AG04450 (cell line): ENCODE measurements at regions of chr2 and their contacts with region 1.

Region 1: GRCh38 chr2:30711646-30712085 is 95.6 kb downstream of the CAPN13 start:
- DNase-seq: peak; percentile 78
- H3K4me3 ChIP-seq: no peak overlapping the region
- H3K27ac ChIP-seq: no peak overlapping the region
- H3K27me3 ChIP-seq: peaks cover 5% of the 10 kb centered on the region
- CTCF ChIP-seq: peak; percentile 100

Region 2: GRCh38 chr2:30155889-30156658 is 555.6 kb before region 1 on chr2:
- CTCF ChIA-PET with region 1: interaction called, 65 read pairs
- POLR2A ChIA-PET with region 1: no interaction called
- DNase-seq: no peak
- H3K4me3 ChIP-seq: no peak overlapping the region
- H3K27ac ChIP-seq: no peak overlapping the region
- H3K27me3 ChIP-seq: no peaks in the 10 kb centered on the region
- CTCF ChIP-seq: no peak

Region 3: GRCh38 chr2:30201990-30202389 is 509.7 kb before region 1 on chr2:
- CTCF ChIA-PET with region 1: interaction called, 181 read pairs
- POLR2A ChIA-PET with region 1: no interaction called
- DNase-seq: no peak
- H3K4me3 ChIP-seq: no peak overlapping the region
- H3K27ac ChIP-seq: no peak overlapping the region
- H3K27me3 ChIP-seq: peaks cover 13% of the 10 kb centered on the region
- CTCF ChIP-seq: no peak

Region 4: DNA sequence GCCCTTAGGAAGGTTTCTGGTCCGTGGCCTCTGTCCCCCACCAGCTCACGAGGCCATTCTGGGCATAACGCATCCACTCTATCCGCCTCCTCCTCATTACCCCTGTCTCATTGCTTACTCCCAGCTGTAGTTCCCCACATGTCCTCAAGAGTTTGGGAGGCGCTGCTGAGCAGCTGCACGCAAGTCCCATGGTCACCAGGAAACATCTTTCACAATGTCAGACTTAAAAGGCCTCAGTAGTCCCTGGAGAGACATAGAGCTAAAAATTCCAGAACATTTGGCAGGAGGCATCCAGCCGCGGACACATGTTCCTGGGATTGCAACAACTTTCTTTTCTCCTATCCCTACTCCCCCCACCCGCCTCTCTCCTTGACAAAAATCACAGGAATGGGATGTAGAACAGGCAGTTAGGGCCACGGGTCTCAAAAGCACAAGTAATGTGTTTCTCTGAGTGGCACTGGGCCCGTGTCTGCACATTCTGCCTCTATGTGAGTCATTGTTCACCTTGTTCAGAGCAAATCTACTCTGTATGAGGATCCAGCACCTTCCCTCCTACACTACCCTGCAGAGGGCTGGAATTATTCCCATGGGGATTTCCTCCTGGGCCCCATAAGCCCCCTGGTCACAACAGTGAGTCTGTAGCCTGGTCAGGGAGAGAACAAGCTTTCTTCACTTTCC is 472.2 kb before region 1 on chr2:
- CTCF ChIA-PET with region 1: interaction called, 24 read pairs
- POLR2A ChIA-PET with region 1: interaction called, 3 read pairs
- DNase-seq: no peak
- H3K4me3 ChIP-seq: no peak overlapping the region
- H3K27ac ChIP-seq: peak overlapping the region; percentile 63
- H3K27me3 ChIP-seq: no peaks in the 10 kb centered on the region
- CTCF ChIP-seq: peak; percentile 93

Region 5: GRCh38 chr2:30373881-30374302 is 337.8 kb before region 1 on chr2:
- CTCF ChIA-PET with region 1: interaction called, 11 read pairs
- POLR2A ChIA-PET with region 1: no interaction called
- DNase-seq: no peak
- H3K4me3 ChIP-seq: no peak overlapping the region
- H3K27ac ChIP-seq: peak overlapping the region; percentile 48
- H3K27me3 ChIP-seq: no peaks in the 10 kb centered on the region
- CTCF ChIP-seq: no peak

Region 6: DNA sequence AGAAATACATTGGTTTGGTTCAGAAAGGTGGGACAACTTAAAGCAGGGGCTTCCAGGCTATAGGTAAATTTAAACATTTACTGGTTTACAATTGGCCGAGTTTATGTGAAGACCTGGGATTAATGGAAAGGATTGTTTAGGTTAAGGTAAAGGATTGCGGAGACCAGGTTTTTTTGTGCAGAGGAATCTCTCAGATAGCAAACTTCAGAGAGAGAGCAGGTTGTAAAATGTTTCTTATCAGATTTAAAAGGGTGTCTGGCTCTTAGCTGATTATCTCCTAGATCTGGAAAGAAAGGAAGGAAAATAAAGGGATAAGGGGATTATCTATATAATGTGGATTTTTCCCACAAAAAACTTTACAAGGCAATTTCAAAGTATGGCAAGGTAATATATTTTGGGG is 163.3 kb before region 1 on chr2:
- CTCF ChIA-PET with region 1: interaction called, 10 read pairs
- POLR2A ChIA-PET with region 1: no interaction called
- DNase-seq: no peak
- H3K4me3 ChIP-seq: no peak overlapping the region
- H3K27ac ChIP-seq: no peak overlapping the region
- H3K27me3 ChIP-seq: no peaks in the 10 kb centered on the region
- CTCF ChIP-seq: no peak

Region 7: DNA sequence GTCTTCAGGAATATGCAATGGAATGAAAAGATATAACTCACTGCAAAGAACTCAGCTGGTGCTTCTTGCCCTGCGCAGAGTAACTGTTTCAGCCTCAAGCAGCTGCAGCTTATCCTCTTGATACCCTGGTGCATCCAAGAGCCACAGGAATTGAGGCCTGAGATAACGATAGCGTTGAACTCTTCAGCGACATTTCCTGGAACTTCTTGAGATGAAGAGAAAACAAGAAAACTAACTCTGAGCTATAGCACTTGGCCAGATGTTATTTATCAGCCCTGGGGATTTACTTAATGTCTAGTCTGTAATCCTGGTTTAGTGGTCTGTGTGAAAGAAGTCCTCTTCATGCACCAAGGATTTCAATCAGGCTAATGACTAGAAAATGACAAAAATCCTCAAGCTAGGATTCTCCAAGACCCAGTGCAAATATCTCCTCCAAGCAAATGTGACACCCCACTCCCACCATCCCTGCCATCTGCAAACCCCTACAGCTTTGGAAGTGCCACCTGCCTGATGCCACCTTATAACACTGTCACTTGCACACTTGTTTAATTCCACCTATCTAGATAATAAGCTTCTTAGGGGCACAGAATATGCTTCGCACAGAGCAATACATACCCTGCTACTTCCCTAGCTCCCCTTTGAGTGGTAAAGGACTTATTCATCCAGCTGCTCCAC is 562.9 kb after region 1 on chr2:
- CTCF ChIA-PET with region 1: interaction called, 11 read pairs
- POLR2A ChIA-PET with region 1: no interaction called
- DNase-seq: peak; percentile 62
- H3K4me3 ChIP-seq: no peak overlapping the region
- H3K27ac ChIP-seq: peak overlapping the region; percentile 42
- H3K27me3 ChIP-seq: peaks cover 6% of the 10 kb centered on the region
- CTCF ChIP-seq: no peak